Caco-2 (cell line): ENCODE measurements at regions of chr14 and their contacts with region 1.

Region 1: GRCh38 chr14:39174560-39175444 is at the start of gene PNN:
- DNase-seq: peak; percentile 98 to 99
- H3K4me3 ChIP-seq: peak within 1 kb of the TSS; percentile 58
- H3K4me3 Mint-ChIP-seq: peak within 1 kb of the TSS; percentile 92
- H3K27ac Mint-ChIP-seq: peak within 1 kb of the TSS; percentile 98
- H3K4me1 ChIP-seq: 0 out of 2 replicates have a peak, but pooled peaks cover 8% of the 10 kb centered on the region
- H3K4me1 Mint-ChIP-seq: peaks cover 7% of the 10 kb centered on the region
- H3K27me3 ChIP-seq: no peaks in the 10 kb centered on the region
- H3K27me3 Mint-ChIP-seq: no peaks in the 10 kb centered on the region
- CTCF ChIP-seq: no peak
- total RNA-seq, gene PNN: 98.5 and 100 TPM in 2 replicates

Region 2: GRCh38 chr14:39025810-39026627 is 148.8 kb before region 1 on chr14:
- CTCF ChIA-PET with region 1: no interaction called
- POLR2A ChIA-PET with region 1: interaction called, 10 read pairs
- intact Hi-C with region 1: no loop called
- DNase-seq: peak; percentile 53 to 59
- H3K4me3 ChIP-seq: no peak overlapping the region
- H3K4me3 Mint-ChIP-seq: peak overlapping the region; percentile 48
- H3K27ac Mint-ChIP-seq: peak overlapping the region; percentile 79
- H3K4me1 ChIP-seq: peaks cover 38% of the 10 kb centered on the region
- H3K4me1 Mint-ChIP-seq: peaks cover 51% of the 10 kb centered on the region
- H3K27me3 ChIP-seq: no peaks in the 10 kb centered on the region
- H3K27me3 Mint-ChIP-seq: no peaks in the 10 kb centered on the region
- CTCF ChIP-seq: no peak

Region 3: DNA sequence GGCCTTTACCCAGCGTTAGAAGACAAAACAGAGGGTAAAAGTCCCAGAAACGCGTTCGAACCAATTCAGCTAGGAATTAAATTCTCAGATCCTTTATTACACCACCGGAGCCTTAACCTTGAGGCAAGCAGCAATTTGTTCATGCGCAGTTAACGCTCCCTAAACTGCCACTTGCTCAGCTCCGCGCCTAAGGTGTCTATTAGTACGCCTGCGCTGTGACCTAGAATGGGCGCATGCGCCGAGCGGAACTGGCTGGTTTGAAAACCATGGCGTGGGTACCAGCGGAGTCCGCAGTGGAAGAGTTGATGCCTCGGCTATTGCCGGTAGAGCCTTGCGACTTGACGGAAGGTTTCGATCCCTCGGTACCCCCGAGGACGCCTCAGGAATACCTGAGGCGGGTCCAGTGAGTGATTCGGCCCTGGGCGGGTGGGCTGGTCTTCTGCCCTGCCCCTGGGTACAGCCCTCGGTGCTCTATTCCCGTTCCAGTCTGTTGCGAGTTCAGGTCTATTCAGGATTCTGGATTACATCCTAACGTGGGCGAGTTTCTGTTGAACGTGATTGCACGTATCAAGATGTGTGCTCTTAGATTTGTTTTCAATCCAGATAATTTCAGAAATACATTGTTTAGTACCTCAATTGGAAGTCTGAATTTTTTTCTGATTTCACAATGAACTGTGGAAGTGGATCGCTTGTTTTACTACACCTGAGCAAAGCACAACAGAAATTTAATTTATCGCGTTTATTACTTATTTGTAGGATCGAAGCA is 60.5 kb before region 1 on chr14 and contains the start of gene GEMIN2:
- CTCF ChIA-PET with region 1: interaction called, 4 read pairs
- POLR2A ChIA-PET with region 1: interaction called, 9 read pairs
- intact Hi-C with region 1: loop called (anchors 2 kb)
- DNase-seq: peak; percentile 91 to 92
- H3K4me3 ChIP-seq: peak within 1 kb of the TSS; percentile 54
- H3K4me3 Mint-ChIP-seq: peak within 1 kb of the TSS; percentile 94
- H3K27ac Mint-ChIP-seq: peak within 1 kb of the TSS; percentile 79
- H3K4me1 ChIP-seq: no peaks in the 10 kb centered on the region
- H3K4me1 Mint-ChIP-seq: peaks cover 7% of the 10 kb centered on the region
- H3K27me3 ChIP-seq: no peaks in the 10 kb centered on the region
- H3K27me3 Mint-ChIP-seq: no peaks in the 10 kb centered on the region
- CTCF ChIP-seq: no peak
- total RNA-seq, gene GEMIN2: 26.3 and 31.4 TPM in 2 replicates

Region 4: GRCh38 chr14:39241637-39242036 is 66.8 kb after region 1 on chr14:
- CTCF ChIA-PET with region 1: no interaction called
- POLR2A ChIA-PET with region 1: no interaction called
- intact Hi-C with region 1: no loop called
- DNase-seq: no peak
- H3K4me3 ChIP-seq: no peak overlapping the region
- H3K4me3 Mint-ChIP-seq: no peak overlapping the region
- H3K27ac Mint-ChIP-seq: no peak overlapping the region
- H3K4me1 ChIP-seq: peaks cover 10% of the 10 kb centered on the region; the same call in 1 of the 2 replicates
- H3K4me1 Mint-ChIP-seq: peaks cover 7% of the 10 kb centered on the region
- H3K27me3 ChIP-seq: no peaks in the 10 kb centered on the region
- H3K27me3 Mint-ChIP-seq: no peaks in the 10 kb centered on the region
- CTCF ChIP-seq: no peak

Region 5: GRCh38 chr14:39266871-39267591 is 92.2 kb after region 1 on chr14:
- CTCF ChIA-PET with region 1: no interaction called
- POLR2A ChIA-PET with region 1: interaction called, 10 read pairs
- intact Hi-C with region 1: loop called (anchors 1 kb)
- DNase-seq: peak; percentile 85 to 86
- H3K4me3 ChIP-seq: peak overlapping the region; percentile 57
- H3K4me3 Mint-ChIP-seq: peak overlapping the region; percentile 95
- H3K27ac Mint-ChIP-seq: peak overlapping the region; percentile 98
- H3K4me1 ChIP-seq: peaks cover 22% of the 10 kb centered on the region
- H3K4me1 Mint-ChIP-seq: peaks cover 13% of the 10 kb centered on the region
- H3K27me3 ChIP-seq: no peaks in the 10 kb centered on the region
- H3K27me3 Mint-ChIP-seq: no peaks in the 10 kb centered on the region
- CTCF ChIP-seq: no peak

Region 6: GRCh38 chr14:39368261-39368959 is 193.6 kb after region 1 on chr14:
- CTCF ChIA-PET with region 1: interaction called, 4 read pairs
- POLR2A ChIA-PET with region 1: interaction called, 3 read pairs
- intact Hi-C with region 1: loop called (anchors 5 kb)
- DNase-seq: peak; percentile 69 to 80
- H3K4me3 ChIP-seq: no peak overlapping the region
- H3K4me3 Mint-ChIP-seq: no peak overlapping the region
- H3K27ac Mint-ChIP-seq: no peak overlapping the region
- H3K4me1 ChIP-seq: no peaks in the 10 kb centered on the region
- H3K4me1 Mint-ChIP-seq: peaks cover 11% of the 10 kb centered on the region
- H3K27me3 ChIP-seq: no peaks in the 10 kb centered on the region
- H3K27me3 Mint-ChIP-seq: no peaks in the 10 kb centered on the region
- CTCF ChIP-seq: peak; percentile 69 to 71

Region 7: GRCh38 chr14:39432179-39432618 is 257.4 kb after region 1 on chr14 and contains the start of gene FBXO33:
- CTCF ChIA-PET with region 1: no interaction called
- POLR2A ChIA-PET with region 1: interaction called, 7 read pairs
- intact Hi-C with region 1: loop called (anchors 2 kb)
- DNase-seq: peak; percentile 96 to 97
- H3K4me3 ChIP-seq: peak within 1 kb of the TSS; percentile 93
- H3K4me3 Mint-ChIP-seq: peak within 1 kb of the TSS; percentile 93
- H3K27ac Mint-ChIP-seq: peak within 1 kb of the TSS; percentile 100
- H3K4me1 ChIP-seq: peaks cover 12% of the 10 kb centered on the region
- H3K4me1 Mint-ChIP-seq: peaks cover 19% of the 10 kb centered on the region
- H3K27me3 ChIP-seq: no peaks in the 10 kb centered on the region
- H3K27me3 Mint-ChIP-seq: no peaks in the 10 kb centered on the region
- CTCF ChIP-seq: no peak
- total RNA-seq, gene FBXO33: 6.0 and 6.5 TPM in 2 replicates

Region 8: DNA sequence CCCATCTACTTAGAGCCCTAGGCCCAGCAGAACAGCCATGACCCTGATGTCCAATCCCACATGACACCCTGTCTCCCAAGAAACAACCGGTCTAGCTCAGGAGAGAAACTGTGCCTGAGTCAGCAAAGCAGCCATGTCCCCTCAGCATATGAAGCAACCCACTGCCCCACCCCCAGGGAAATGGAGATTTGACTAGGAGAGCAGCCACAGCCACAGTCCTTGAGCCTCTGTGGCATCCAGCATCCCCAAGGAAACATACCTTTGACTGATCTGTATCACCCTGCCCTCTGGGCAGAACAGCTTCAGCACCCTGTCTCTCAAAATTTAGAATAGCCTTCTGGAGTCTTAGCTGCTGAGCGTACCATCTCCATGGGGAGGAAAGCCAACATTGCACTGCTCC is 899.4 kb after region 1 on chr14:
- CTCF ChIA-PET with region 1: no interaction called
- POLR2A ChIA-PET with region 1: interaction called, 15 read pairs
- intact Hi-C with region 1: no loop called
- DNase-seq: peak in 1 of 2 experiments; percentile 27
- H3K4me3 ChIP-seq: no peak overlapping the region
- H3K4me3 Mint-ChIP-seq: no peak overlapping the region
- H3K27ac Mint-ChIP-seq: no peak overlapping the region
- H3K4me1 ChIP-seq: no peaks in the 10 kb centered on the region
- H3K4me1 Mint-ChIP-seq: no peaks in the 10 kb centered on the region
- H3K27me3 ChIP-seq: no peaks in the 10 kb centered on the region
- H3K27me3 Mint-ChIP-seq: no peaks in the 10 kb centered on the region
- CTCF ChIP-seq: no peak